AG04449 (cell line): ENCODE measurements at regions of chr15 and their contacts with region 1.

Region 1: GRCh38 chr15:45611305-45611704 is 23.5 kb upstream of the SQOR start:
- DNase-seq: no peak
- H3K4me3 ChIP-seq: no peak overlapping the region
- CTCF ChIP-seq: peak; percentile 18

Region 2: DNA sequence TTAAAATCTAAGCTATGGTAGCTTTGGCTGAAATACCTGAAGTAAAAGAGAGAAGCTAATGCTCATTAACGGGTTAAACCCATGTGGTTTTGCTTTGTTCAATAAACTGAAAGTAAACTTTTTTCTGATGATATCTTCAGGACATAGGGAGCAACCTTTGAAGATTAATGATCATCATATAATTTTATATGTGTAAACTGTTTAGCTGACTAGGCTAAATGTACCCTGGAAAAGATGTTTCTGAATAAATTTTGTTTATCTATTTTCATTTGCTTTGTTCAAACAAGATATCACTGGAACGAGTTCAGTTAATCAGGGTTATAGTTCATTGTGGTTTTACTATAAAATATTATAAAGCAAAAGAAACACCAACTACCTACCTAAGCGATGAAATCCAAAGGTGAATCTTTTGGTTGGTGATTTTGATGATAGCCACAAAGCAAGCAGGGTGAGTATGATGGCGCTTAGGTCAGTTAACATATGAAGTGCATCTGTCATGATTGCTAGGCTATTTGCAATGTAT is 100.5 kb before region 1 on chr15:
- CTCF ChIA-PET with region 1: interaction called, 22 read pairs
- POLR2A ChIA-PET with region 1: no interaction called
- DNase-seq: no peak
- H3K4me3 ChIP-seq: no peak overlapping the region
- CTCF ChIP-seq: no peak

Region 3: GRCh38 chr15:45594319-45594718 is 17.0 kb before region 1 on chr15:
- CTCF ChIA-PET with region 1: interaction called, 17 read pairs
- POLR2A ChIA-PET with region 1: no interaction called
- DNase-seq: no peak
- H3K4me3 ChIP-seq: no peak overlapping the region
- CTCF ChIP-seq: no peak

Region 4: GRCh38 chr15:45634442-45635190 is 23.3 kb after region 1 on chr15 and contains the start of gene SQOR:
- CTCF ChIA-PET with region 1: interaction called, 18 read pairs
- POLR2A ChIA-PET with region 1: no interaction called
- DNase-seq: no peak
- H3K4me3 ChIP-seq: peak within 1 kb of the TSS; percentile 68
- CTCF ChIP-seq: no peak